Posterior cingulate gyrus (tissue), 11 donors: ENCODE measurements at regions of chr19 and their contacts with region 1.

Region 1: GRCh38 chr19:40285353-40286234 is 449 bp upstream of the AKT2 start:
- DNase-seq: peak; percentile 98 to 100 (median 98)

Region 2: GRCh38 chr19:40241809-40242384 is 43.7 kb before region 1 on chr19:
- intact Hi-C with region 1: loop called (anchors 5 kb)
- DNase-seq: peak; percentile 72 to 97 (median 78)

Region 3: GRCh38 chr19:40348125-40348913 is 62.7 kb after region 1 on chr19 and contains the starts of genes C19orf47 and PLD3:
- intact Hi-C with region 1: loop called (anchors 2 kb)
- DNase-seq: peak; percentile 99 to 100 (median 100)